ENCODE measurements at regions of chr4 and their contacts with region 1.

Region 1: GRCh38 chr4:99205153-99205979 is 13.7 kb downstream of the ADH6 start:
- DNase-seq: no peak

Region 2: GRCh38 chr4:99324979-99325378 is 119.6 kb after region 1 on chr4:
- intact Hi-C with region 1: loop called (anchors 10 kb)
- DNase-seq: no peak

Region 3: DNA sequence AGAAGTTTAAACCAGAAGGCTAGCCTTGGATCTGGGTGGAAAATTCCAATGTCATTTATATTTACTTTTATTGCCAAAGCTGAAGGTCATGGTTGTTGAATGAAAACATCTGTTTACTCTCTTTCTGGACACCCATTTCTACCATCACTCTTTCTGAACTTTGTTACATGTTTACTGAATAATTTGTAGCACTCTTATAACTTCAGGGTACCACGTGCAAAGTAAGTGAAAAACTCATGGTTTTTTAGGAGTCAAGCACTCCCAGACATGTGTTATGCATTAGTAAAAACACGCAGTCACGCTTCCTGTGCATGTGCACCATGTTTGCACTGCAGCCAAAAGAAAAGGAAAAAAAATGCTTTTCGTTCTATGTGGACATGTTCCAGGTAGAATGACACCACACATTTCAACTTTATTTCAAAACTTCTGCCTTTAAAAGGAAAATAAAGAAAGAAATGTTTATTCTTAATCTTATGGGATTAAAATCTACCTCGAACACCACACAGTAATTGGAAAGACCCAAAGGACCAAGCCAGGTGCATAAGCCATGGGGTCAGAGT is 178.5 kb after region 1 on chr4:
- intact Hi-C with region 1: loop called (anchors 5 kb)
- DNase-seq: no peak

Measured in cardiac septum (tissue), 1 donor.